WTC11 (cell line): ENCODE measurements at regions of chr17 and their contacts with region 1.

Region 1: DNA sequence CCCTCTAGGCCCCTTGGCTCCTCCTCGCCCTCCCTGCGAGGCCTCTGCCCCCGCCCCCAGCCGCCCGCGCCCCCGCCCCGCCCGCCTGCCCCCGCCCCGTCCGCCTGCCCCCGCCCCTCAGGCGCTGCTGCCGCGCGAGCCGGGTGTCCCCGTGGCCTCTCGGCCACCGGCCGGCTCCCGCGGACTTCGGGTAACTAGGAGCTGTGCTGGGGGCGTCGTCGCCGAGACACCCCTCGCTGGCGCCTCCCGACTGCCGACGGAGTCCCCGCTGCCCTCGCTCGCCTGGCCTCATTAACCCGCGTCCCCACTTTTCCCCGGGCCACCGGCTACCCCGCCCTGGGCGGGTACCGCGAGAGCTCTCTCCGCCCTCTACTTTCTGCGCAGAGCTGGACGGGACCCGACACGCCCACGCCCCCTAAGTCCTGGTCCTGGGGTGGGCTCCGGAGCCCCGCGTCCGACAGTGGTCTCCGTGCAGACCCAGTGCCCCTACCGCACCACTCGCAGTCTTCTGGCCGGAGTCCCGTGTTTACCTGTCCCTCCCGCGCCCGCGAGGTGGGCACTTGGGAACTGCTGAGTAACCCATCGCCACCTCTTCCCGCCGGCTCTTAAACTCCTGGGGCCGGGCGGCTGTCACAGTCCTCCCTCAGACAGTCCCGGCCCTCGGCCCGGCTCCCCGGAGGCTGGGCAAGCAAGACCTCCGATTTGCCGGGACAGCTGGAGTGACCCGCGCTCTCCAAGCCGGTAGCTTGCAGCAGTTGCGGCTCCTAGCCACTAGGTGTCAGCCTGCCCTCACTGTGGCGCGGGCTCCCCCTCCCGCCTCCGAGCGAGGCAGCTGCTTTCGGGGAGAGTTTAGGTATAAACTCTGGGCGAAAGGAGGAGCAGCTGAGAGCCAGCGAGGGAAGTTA is at the start of gene TLCD1:
- DNase-seq: peak; percentile 99
- ATAC-seq: peak; percentile 29
- H3K4me3 Mint-ChIP-seq: peak within 1 kb of the TSS; percentile 93
- H3K27ac Mint-ChIP-seq: peak within 1 kb of the TSS; percentile 99
- H3K4me1 Mint-ChIP-seq: peaks cover 44% of the 10 kb centered on the region
- H3K27me3 Mint-ChIP-seq: no peaks in the 10 kb centered on the region
- CTCF ChIP-seq: peak; percentile 96
- total RNA-seq, gene TLCD1: 36.0 to 41.2 TPM (median 36.5 TPM) in 3 replicates

Region 2: GRCh38 chr17:28661635-28662537 is 64.6 kb before region 1 on chr17 and contains the starts of genes SDF2 and SUPT6H:
- CTCF ChIA-PET with region 1: interaction called, 11 read pairs
- POLR2A ChIA-PET with region 1: interaction called, 4 read pairs
- DNase-seq: peak; percentile 92
- ATAC-seq: peak; percentile 80
- H3K4me3 Mint-ChIP-seq: peak within 1 kb of the TSS; percentile 99
- H3K27ac Mint-ChIP-seq: peak within 1 kb of the TSS; percentile 100
- H3K4me1 Mint-ChIP-seq: peaks cover 20% of the 10 kb centered on the region
- H3K27me3 Mint-ChIP-seq: 0 out of 2 replicates have a peak, but pooled peaks cover 3% of the 10 kb centered on the region
- CTCF ChIP-seq: no peak
- total RNA-seq, gene SDF2: 44.4 to 49.4 TPM (median 45.9 TPM) in 3 replicates
- total RNA-seq, gene SUPT6H: 49.1 to 61.3 TPM (median 54.5 TPM) in 3 replicates

Region 3: DNA sequence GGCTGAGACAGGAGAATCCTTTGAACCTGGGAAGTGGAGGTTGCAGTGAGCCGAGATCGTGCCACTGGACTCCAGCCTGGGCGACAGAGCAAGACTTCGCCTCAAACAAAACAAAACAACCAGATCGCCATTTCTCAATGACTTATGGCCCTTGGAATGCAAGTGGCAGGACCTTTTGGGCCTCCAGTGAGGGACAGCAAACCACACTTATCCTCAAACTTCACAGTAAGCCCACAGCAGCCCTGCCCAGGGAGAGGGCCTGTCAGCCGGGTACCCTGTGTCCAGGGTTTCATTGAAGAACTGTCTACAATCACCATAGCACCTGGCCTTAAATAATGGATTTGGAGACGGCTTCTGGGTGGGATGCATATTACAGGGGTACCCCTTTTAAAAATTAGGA is 29.0 kb after region 1 on chr17:
- CTCF ChIA-PET with region 1: interaction called, 541 read pairs
- POLR2A ChIA-PET with region 1: interaction called, 310 read pairs
- DNase-seq: no peak
- ATAC-seq: no peak
- H3K4me3 Mint-ChIP-seq: no peak overlapping the region
- H3K27ac Mint-ChIP-seq: no peak overlapping the region
- H3K4me1 Mint-ChIP-seq: peaks cover 51% of the 10 kb centered on the region
- H3K27me3 Mint-ChIP-seq: no peaks in the 10 kb centered on the region
- CTCF ChIP-seq: no peak

Region 4: DNA sequence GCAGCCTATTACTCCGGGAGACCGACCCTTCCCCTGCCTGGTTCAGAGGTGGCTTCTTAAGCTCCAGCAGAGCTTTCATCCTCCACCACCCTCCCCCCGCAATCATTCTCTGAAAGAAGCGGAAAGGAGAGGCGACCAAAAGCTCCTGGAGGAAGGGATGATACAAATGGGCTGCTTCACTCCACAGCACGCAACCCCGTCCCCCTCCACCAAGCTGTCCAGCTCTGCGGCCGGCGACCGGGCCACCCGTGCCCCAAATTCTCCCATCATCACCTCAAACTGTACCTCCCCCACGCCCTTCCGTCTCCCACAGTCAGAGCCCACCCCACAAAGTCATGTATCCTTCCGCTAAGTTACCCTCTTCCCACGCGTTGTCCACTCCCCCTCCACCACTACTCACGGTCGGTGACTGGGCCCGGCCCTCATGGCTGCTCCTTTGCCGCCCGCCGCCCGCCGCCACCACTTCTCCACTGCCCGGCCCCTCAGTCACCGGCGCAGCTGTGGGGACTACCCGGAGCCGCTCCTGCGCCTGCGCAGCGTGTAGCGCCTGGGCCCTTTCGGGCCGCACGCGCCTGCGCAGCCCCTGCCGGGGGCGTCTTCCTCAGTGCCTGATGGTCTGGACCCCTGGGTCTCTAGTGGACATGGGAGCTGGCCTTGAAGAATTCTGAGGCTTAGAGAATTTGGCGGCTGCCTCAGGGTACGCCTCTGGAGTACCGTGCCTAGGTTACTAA is 116.0 kb after region 1 on chr17 and contains the start of gene FAM222B:
- CTCF ChIA-PET with region 1: interaction called, 23 read pairs
- POLR2A ChIA-PET with region 1: interaction called, 17 read pairs
- DNase-seq: peak; percentile 89
- ATAC-seq: peak; percentile 99
- H3K4me3 Mint-ChIP-seq: peak within 1 kb of the TSS; percentile 96
- H3K27ac Mint-ChIP-seq: peak within 1 kb of the TSS; percentile 95
- H3K4me1 Mint-ChIP-seq: peaks cover 15% of the 10 kb centered on the region
- H3K27me3 Mint-ChIP-seq: no peaks in the 10 kb centered on the region
- CTCF ChIP-seq: no peak
- total RNA-seq, gene FAM222B: 86.6 to 94.6 TPM (median 91.5 TPM) in 3 replicates

Region 5: DNA sequence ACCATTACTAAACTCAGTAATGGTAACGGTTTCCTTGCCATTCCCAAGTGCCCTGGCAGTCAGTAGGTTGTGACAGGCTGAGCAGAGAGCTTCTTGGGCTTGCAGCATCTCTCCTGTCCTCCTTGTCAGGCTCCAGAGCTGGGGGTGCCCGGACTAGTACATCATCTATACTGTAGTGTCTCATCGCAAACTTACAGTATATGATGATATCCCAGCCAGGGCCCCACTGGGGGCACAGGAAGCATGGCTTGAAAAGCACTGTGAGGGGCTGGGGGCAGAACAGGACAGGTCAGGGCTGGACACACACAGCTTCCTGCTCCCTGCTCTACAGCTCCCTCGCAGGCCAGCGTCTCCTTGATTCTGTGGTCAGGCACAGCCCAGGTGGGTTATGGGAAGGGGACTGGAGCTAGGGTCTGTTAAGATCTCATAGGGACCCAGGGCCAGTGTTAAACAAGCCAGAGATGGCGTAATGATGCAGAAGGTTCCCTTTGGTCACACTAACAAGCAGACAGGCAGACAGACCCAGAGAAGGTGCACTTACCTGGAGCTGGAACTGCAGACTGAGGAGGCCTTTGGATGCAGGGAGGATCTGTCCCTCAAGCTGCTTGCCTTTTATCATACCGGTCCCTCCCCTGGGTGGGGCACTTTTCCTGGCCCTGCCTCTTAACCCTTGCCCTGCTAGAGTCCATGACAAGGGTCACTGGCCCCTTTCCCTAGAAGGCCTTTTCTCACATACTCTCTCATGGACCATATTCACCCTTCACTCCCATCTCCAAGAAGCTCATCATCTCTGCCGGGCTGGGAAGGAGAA is 135.1 kb after region 1 on chr17:
- CTCF ChIA-PET with region 1: interaction called, 17 read pairs
- POLR2A ChIA-PET with region 1: interaction called, 12 read pairs
- DNase-seq: peak; percentile 39
- ATAC-seq: peak; percentile 77
- H3K4me3 Mint-ChIP-seq: no peak overlapping the region; the same call in 1 of the 2 replicates
- H3K27ac Mint-ChIP-seq: peak overlapping the region; percentile 88; the same call in 1 of the 2 replicates
- H3K4me1 Mint-ChIP-seq: peaks cover 17% of the 10 kb centered on the region
- H3K27me3 Mint-ChIP-seq: no peaks in the 10 kb centered on the region
- CTCF ChIP-seq: no peak

Region 6: GRCh38 chr17:28896884-28897768 is 170.6 kb after region 1 on chr17 and contains the start of gene FLOT2:
- CTCF ChIA-PET with region 1: interaction called, 103 read pairs
- POLR2A ChIA-PET with region 1: interaction called, 21 read pairs
- DNase-seq: peak; percentile 72
- ATAC-seq: peak; percentile 69
- H3K4me3 Mint-ChIP-seq: peak within 1 kb of the TSS; percentile 94
- H3K27ac Mint-ChIP-seq: peak within 1 kb of the TSS; percentile 93
- H3K4me1 Mint-ChIP-seq: peaks cover 33% of the 10 kb centered on the region
- H3K27me3 Mint-ChIP-seq: no peaks in the 10 kb centered on the region
- CTCF ChIP-seq: no peak
- total RNA-seq, gene FLOT2: 139 to 153 TPM (median 144 TPM) in 3 replicates

Region 7: GRCh38 chr17:28951991-28952975 is 225.8 kb after region 1 on chr17:
- CTCF ChIA-PET with region 1: interaction called, 116 read pairs
- POLR2A ChIA-PET with region 1: interaction called, 14 read pairs
- DNase-seq: peak; percentile 94
- ATAC-seq: peak; percentile 74
- H3K4me3 Mint-ChIP-seq: no peak overlapping the region
- H3K27ac Mint-ChIP-seq: no peak overlapping the region
- H3K4me1 Mint-ChIP-seq: peaks cover 28% of the 10 kb centered on the region
- H3K27me3 Mint-ChIP-seq: no peaks in the 10 kb centered on the region
- CTCF ChIP-seq: no peak